Activated B cell treated with CpG ODN at 0.5 μM for 24 hours (primary cell): ENCODE measurements at regions of chrX and their contacts with region 1.

Region 1: DNA sequence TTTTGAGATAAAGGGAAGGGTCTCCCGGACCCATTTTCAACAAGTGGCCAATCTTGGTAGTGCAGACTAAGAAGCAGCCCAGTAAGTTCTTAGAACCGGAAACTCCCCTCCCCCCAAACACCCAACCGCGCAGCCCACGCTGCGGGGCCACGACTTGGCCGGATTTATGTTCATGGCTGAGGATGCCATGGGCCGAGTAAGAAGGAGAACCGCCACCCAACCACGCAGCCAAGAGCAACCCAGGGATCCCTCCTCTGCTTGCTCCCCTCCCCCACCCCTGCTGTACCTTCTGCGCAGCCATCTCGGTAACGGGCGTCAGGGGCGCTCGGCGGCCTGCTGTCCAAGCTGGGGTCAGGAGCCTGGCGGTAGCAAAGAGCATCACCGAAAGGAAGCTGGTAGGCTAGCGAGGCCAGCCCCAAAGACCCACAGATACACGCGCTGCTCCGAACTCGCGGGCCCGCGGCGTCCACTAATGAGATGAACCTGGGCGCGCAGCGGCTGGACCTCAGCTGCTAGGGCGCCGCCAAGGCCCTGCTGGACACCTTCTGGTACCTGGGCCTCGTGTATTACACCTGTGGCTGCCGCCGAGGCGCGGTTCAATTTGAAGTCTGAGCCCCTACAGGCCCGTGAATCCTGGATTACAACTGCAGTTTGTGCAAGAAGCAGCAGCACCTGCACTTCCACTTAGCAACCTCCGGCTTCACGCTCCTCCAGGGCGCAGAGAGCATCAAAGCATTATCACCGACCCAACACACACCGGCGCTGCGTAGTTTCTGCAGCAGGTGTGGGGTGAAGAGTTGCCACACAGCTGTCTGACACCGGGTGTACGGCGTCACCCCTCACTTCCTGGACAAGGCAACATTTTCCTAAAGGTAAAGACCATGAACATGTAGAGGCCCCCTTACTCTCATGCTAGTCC is 63.4 kb downstream of the NUDT10 start:
- DNase-seq: peak; percentile 32
- ATAC-seq: peak; percentile 70
- H3K4me3 Mint-ChIP-seq: peak overlapping the region; percentile 93
- H3K27ac Mint-ChIP-seq: peak overlapping the region; percentile 91
- H3K4me1 Mint-ChIP-seq: peaks cover 31% of the 10 kb centered on the region
- H3K27me3 Mint-ChIP-seq: no peaks in the 10 kb centered on the region
- CTCF ChIP-seq: no peak

Region 2: DNA sequence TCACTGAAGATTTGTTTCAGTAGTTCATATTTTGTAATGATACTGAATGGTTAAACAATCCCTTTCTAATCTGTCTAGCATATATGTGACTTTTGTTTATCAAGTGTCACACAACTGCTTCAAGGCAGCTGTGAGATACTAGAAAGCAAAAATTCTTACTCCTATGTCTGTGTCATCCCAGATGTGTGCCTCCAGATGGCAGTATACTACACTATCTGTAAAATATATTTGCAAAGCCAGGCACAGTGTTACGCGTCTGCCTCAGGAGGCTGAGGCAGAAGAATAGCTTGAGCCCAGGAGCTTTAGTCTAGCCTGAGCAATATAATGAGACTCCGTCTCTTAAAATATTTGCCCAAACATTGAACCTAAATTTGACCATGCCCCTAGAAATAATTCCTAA is 59.5 kb before region 1 on chrX:
- CTCF ChIA-PET with region 1: interaction called, 3 read pairs
- POLR2A ChIA-PET with region 1: no interaction called
- intact Hi-C with region 1: loop called (anchors 5 kb)
- DNase-seq: no peak
- ATAC-seq: peak; percentile 71
- H3K4me3 Mint-ChIP-seq: no peak overlapping the region
- H3K27ac Mint-ChIP-seq: no peak overlapping the region
- H3K4me1 Mint-ChIP-seq: peaks cover 9% of the 10 kb centered on the region
- H3K27me3 Mint-ChIP-seq: peaks cover 1% of the 10 kb centered on the region
- CTCF ChIP-seq: no peak

Region 3: GRCh38 chrX:52504551-52504950 is 1108.5 kb after region 1 on chrX:
- CTCF ChIA-PET with region 1: no interaction called
- POLR2A ChIA-PET with region 1: no interaction called
- intact Hi-C with region 1: no loop called
- DNase-seq: no peak
- ATAC-seq: no peak
- H3K4me3 Mint-ChIP-seq: no peak overlapping the region
- H3K27ac Mint-ChIP-seq: no peak overlapping the region
- H3K4me1 Mint-ChIP-seq: no peaks in the 10 kb centered on the region
- H3K27me3 Mint-ChIP-seq: no peaks in the 10 kb centered on the region
- CTCF ChIP-seq: no peak